ENCODE measurements at regions of chr2 and their contacts with region 1.

Region 1: GRCh38 chr2:74482801-74483674 is at the starts of genes CCDC142 and TTC31:
- DNase-seq: peak; percentile 91
- ATAC-seq: peak; percentile 93
- H3K4me3 Mint-ChIP-seq: peak within 1 kb of the TSS; percentile 99
- H3K27ac Mint-ChIP-seq: peak within 1 kb of the TSS; percentile 99
- H3K4me1 Mint-ChIP-seq: peaks cover 30% of the 10 kb centered on the region
- H3K27me3 Mint-ChIP-seq: no peaks in the 10 kb centered on the region
- total RNA-seq, gene CCDC142: 36.8 to 37.1 TPM
- total RNA-seq, gene TTC31: 44.1 to 46.2 TPM

Region 2: DNA sequence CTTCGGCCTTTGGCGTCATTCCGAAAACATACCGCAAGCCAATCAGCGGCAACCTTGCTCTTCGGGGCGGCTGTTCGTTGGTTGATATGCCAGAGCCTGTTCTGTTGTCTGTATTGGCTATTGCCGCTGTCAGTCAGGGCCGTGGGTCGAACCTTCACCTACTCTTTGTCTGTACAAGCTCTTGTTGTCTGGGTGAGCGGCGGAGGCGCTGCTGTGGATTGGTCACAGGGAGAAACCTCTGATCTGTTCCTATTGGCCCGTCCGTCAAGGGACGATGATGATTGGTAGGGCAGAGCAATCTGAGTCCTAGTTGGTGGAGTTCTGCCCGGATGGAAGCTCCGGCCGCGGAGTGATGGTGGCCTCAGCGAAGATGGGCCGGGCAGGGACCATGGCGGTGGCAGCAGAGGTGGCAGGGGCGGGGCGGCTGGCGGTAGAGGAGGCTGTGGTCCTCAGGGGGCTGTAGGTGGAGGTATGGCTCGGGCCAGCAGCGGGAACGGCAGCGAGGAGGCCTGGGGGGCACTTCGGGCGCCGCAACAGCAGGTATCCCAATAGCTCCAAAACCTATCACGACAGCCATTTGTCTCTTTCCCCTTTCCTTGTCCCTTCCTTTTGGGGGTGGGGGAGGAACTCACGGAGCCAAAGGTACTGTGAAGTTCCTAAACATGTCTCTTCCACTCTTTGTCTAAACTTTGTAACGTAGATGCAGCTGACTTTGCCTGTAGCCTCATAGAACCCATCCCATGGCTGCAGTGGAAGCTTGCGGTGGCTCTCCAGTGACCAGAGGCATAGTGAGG is 24.7 kb before region 1 on chr2 and contains the start of gene WBP1:
- POLR2A ChIA-PET with region 1: interaction called, 35 read pairs
- DNase-seq: peak; percentile 93
- ATAC-seq: peak; percentile 89
- H3K4me3 Mint-ChIP-seq: peak within 1 kb of the TSS; percentile 99
- H3K27ac Mint-ChIP-seq: peak within 1 kb of the TSS; percentile 93
- H3K4me1 Mint-ChIP-seq: peaks cover 48% of the 10 kb centered on the region
- H3K27me3 Mint-ChIP-seq: no peaks in the 10 kb centered on the region
- total RNA-seq, gene WBP1: 66.8 to 69.6 TPM

Region 3: DNA sequence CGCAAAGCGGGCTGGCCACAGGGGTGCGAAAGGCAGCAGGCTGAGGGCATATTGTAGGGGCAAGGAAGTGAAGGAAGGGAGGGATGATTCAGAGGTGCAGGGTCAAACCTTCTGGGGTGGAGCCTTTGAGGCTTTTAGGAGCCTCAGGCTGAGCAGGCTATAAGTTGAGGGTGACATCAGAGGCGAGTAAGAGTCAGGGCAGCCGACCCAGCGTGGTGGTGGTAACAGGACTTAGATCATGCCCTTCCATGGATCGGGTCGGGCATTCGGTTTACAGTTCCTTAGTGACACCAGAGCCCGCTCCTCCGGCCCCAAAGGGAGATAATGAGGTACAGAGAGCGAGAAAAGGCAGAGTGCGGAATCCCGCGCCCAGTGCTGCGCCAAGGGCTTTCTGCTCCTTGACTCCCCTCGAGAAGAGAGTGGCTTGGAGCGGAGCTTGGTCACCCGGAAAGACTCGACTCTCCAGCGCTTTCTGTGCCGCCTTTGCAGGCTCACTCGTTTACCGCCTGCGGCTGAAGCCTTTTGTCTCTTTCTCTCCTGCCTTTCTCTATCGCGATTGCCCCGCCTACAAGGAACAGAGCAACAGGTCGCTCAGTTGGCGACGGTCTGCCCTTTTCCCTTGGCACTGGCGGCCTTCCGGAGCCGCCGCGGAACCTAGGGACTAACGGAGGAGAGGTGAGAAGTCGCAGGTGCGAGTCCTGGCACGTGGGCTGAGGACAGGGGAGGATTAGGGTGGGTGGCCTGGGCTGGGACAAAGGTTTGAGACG is 15.6 kb after region 1 on chr2:
- POLR2A ChIA-PET with region 1: interaction called, 14 read pairs
- DNase-seq: peak; percentile 61
- ATAC-seq: peak; percentile 40
- H3K4me3 Mint-ChIP-seq: peak overlapping the region; percentile 87
- H3K27ac Mint-ChIP-seq: peak overlapping the region; percentile 42
- H3K4me1 Mint-ChIP-seq: peaks cover 26% of the 10 kb centered on the region
- H3K27me3 Mint-ChIP-seq: peaks cover 54% of the 10 kb centered on the region

Region 4: GRCh38 chr2:74529357-74530238 is 46.6 kb after region 1 on chr2 and contains the starts of genes AUP1 and HTRA2:
- POLR2A ChIA-PET with region 1: interaction called, 54 read pairs
- DNase-seq: peak; percentile 93
- ATAC-seq: peak; percentile 91
- H3K4me3 Mint-ChIP-seq: peak within 1 kb of the TSS; percentile 97
- H3K27ac Mint-ChIP-seq: peak within 1 kb of the TSS; percentile 96
- H3K4me1 Mint-ChIP-seq: peaks cover 38% of the 10 kb centered on the region
- H3K27me3 Mint-ChIP-seq: no peaks in the 10 kb centered on the region
- total RNA-seq, gene AUP1: 126 to 127 TPM
- total RNA-seq, gene HTRA2: 46.6 to 47.4 TPM

Region 5: DNA sequence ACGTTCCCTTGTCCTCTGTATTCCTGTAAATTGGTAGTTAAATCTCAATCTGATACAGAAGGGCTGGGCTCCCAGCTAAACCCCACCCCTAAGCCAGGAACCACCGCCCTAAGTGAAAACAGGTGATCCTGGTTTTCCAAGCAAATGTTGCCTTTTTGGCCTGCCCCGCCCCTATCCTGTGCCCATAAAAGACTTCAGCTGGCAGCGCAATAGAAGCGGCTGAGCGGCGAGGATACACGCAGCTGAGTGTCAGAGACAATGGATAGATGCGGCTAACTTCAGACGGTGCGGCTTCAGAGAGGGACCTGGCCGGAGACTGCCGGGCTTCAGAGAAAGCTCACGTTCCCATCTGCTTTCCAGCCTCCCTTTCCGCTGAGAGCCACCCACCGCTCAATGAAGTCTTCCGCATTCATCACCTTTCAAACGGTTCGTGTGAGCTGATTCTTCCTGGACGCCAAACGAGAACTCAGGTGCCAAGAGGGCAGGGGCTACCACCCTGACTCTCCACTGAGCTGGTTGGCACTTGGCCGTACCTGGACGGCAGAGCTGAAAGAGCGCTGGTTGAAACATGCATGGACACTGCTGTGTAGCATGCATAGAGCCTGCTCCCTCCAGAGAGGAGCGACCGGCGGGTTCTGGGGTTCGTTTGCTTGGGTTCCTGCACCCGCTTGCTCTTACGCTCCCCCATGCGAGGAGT is 425.9 kb after region 1 on chr2:
- POLR2A ChIA-PET with region 1: no interaction called
- DNase-seq: no peak
- ATAC-seq: peak; percentile 14
- H3K4me3 Mint-ChIP-seq: peak overlapping the region; percentile 34
- H3K27ac Mint-ChIP-seq: no peak overlapping the region
- H3K4me1 Mint-ChIP-seq: peaks cover 5% of the 10 kb centered on the region
- H3K27me3 Mint-ChIP-seq: peaks cover 43% of the 10 kb centered on the region

Measured in activated naive CD8-positive, alpha-beta T cell treated with anti-CD3 and anti-CD28 coated beads, Interleukin-2, amount 10 ng/mL, durations not matched to agents 7 days and 5 days (primary cell).